ENCODE measurements at regions of chr20 and their contacts with region 1.

Region 1: GRCh38 chr20:38221119-38221589 is 39.4 kb downstream of the KIAA1755 start:
- DNase-seq: no peak
- H3K4me3 ChIP-seq: peak overlapping the region; percentile 36
- CTCF ChIP-seq: peak; percentile 97

Region 2: GRCh38 chr20:37864298-37864697 is 356.9 kb before region 1 on chr20:
- CTCF ChIA-PET with region 1: interaction called, 10 read pairs
- POLR2A ChIA-PET with region 1: no interaction called
- DNase-seq: no peak
- H3K4me3 ChIP-seq: no peak overlapping the region
- CTCF ChIP-seq: no peak

Region 3: DNA sequence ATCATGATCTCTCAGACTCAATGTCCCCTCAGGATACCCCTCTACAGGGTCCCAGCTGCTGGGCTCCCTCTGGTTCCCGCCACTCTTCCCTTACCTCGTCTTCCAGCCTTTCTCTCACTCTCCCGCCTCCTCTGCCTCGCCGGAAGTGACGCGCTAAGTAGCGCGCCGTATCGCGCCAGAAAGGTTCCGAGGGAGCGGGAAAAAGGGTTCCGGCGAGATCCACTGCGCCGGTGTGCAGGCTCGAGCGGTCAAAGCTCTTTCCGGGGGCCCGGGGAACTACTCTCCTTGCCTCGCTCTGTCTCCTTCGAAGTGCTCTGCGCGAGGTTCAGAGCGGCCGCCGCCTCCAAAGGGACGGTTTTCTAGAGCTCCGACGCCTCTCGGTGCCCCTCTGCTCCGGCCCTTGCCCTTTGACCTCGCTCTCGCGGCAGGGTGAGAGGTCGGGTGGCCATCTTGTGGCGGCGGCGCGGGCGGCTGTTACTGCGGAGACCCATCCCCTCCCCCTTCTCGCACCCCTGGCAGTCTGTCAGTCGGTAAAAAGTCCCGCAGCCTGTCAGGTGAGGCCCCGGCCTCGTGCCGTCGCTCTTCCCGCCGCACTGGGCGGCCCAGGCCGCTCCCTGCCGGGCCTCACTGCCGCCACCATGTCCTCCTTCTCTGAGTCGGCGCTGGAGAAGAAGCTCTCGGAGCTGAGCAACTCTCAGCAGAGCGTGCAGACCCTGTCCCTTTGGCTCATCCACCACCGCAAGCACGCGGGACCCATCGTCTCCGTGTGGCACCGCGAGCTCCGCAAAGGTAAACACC is 187.6 kb before region 1 on chr20 and contains the starts of genes RPRD1B and TTI1:
- CTCF ChIA-PET with region 1: interaction called, 43 read pairs
- POLR2A ChIA-PET with region 1: no interaction called
- DNase-seq: no peak
- H3K4me3 ChIP-seq: peak within 1 kb of the TSS; percentile 95
- CTCF ChIP-seq: no peak

Region 4: GRCh38 chr20:38113401-38114325 is 107.5 kb before region 1 on chr20:
- CTCF ChIA-PET with region 1: interaction called, 36 read pairs
- POLR2A ChIA-PET with region 1: no interaction called
- DNase-seq: no peak
- H3K4me3 ChIP-seq: no peak overlapping the region
- CTCF ChIP-seq: peak; percentile 25

Region 5: DNA sequence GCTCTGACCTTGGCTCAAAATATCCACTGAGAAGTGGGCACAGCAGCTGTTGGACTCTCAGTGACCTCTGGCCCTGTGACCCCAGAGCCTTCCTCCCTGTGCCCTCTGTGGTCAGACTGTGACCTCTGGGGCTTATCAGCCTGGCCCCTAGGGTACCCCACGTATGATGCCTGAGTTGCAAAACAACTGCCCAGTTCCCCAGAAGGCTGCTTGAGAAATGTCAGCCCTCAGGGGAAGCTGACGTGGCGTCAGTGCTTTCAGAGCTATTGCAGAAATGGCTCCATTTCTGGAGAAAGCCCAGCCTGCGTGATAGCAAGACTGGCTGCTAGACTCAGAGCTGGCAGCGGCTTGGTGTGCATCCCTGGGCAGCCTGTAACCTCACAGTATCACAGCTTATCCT is 24.6 kb before region 1 on chr20:
- CTCF ChIA-PET with region 1: interaction called, 356 read pairs
- POLR2A ChIA-PET with region 1: interaction called, 3 read pairs
- DNase-seq: no peak
- H3K4me3 ChIP-seq: no peak overlapping the region
- CTCF ChIP-seq: no peak

Region 6: GRCh38 chr20:38304845-38305447 is 83.8 kb after region 1 on chr20:
- CTCF ChIA-PET with region 1: interaction called, 250 read pairs
- POLR2A ChIA-PET with region 1: no interaction called
- DNase-seq: no peak
- H3K4me3 ChIP-seq: no peak overlapping the region
- CTCF ChIP-seq: peak; percentile 68

Region 7: GRCh38 chr20:38406476-38406875 is 185.3 kb after region 1 on chr20:
- CTCF ChIA-PET with region 1: interaction called, 105 read pairs
- POLR2A ChIA-PET with region 1: no interaction called
- DNase-seq: no peak
- H3K4me3 ChIP-seq: no peak overlapping the region
- CTCF ChIP-seq: no peak

Measured in AG04449 (cell line).